Right ventricle myocardium inferior (tissue), 1 donor: ENCODE measurements at regions of chr5 and their contacts with region 1.

Region 1: GRCh38 chr5:178279725-178280438 is 47.3 kb upstream of the PHYKPL start:
- DNase-seq: peak; percentile 94
- ATAC-seq: peak; percentile 84

Region 2: GRCh38 chr5:178130604-178131485 is 149.0 kb before region 1 on chr5 and contains the start of gene RMND5B:
- intact Hi-C with region 1: no loop called
- DNase-seq: peak; percentile 93
- ATAC-seq: peak; percentile 96
- total RNA-seq, gene RMND5B: 35.2 TPM

Region 3: GRCh38 chr5:178232124-178232919 is 47.6 kb before region 1 on chr5 and contains the start of gene PHYKPL:
- intact Hi-C with region 1: no loop called
- DNase-seq: peak; percentile 92
- ATAC-seq: peak; percentile 75
- total RNA-seq, gene PHYKPL: 34.5 TPM

Region 4: GRCh38 chr5:178324481-178325310 is 44.8 kb after region 1 on chr5:
- intact Hi-C with region 1: no loop called
- DNase-seq: peak; percentile 62
- ATAC-seq: no peak

Region 5: GRCh38 chr5:178551059-178551458 is 271.2 kb after region 1 on chr5:
- intact Hi-C with region 1: loop called (anchors 5 kb)
- DNase-seq: no peak
- ATAC-seq: no peak